Activated T-helper 1 cell treated with anti-CD3 and anti-CD28 coated beads, Interleukin-12 subunit alpha, Interleukin-12 subunit beta, Interleukin-2, Interleukin-4 antibody, amounts not matched to agents 30 ng/mL and 10 ng/mL and 1 ng/mL, durations not matched to agents 14 hours and 24 hours and 36 hours (primary cell): ENCODE measurements at regions of chr3 and their contacts with region 1.

Region 1: GRCh38 chr3:156554842-156555687 is at the start of gene SSR3:
- DNase-seq: peak; percentile 99
- H3K4me3 Mint-ChIP-seq: peak within 1 kb of the TSS; percentile 95
- H3K27ac Mint-ChIP-seq: peak within 1 kb of the TSS; percentile 94
- H3K4me1 Mint-ChIP-seq: peaks cover 53% of the 10 kb centered on the region
- H3K27me3 Mint-ChIP-seq: no peaks in the 10 kb centered on the region
- total RNA-seq, gene SSR3: 149 and 162 TPM in 2 replicates

Region 2: DNA sequence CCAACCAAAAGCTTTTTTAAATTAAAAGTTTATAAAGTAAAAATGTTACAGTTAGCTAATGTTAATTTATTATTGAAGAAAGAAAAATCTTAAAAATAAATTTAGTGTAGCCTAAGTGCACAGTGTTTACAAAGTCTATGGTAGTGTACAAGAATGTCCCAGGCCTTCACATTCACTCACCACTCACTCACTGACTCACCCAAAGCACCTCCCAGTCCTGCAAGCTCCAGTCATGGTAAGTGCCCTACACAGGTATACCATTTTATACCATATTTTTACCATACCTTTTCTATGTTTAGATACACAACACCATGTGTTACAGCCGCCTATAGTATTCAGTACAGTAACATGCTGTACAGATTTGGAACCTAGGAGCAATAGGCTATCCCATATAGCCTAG is 29.3 kb before region 1 on chr3:
- intact Hi-C with region 1: loop called (anchors 2 kb)
- DNase-seq: no peak
- H3K4me3 Mint-ChIP-seq: no peak overlapping the region
- H3K27ac Mint-ChIP-seq: no peak overlapping the region
- H3K4me1 Mint-ChIP-seq: peaks cover 27% of the 10 kb centered on the region
- H3K27me3 Mint-ChIP-seq: peaks cover 17% of the 10 kb centered on the region

Region 3: DNA sequence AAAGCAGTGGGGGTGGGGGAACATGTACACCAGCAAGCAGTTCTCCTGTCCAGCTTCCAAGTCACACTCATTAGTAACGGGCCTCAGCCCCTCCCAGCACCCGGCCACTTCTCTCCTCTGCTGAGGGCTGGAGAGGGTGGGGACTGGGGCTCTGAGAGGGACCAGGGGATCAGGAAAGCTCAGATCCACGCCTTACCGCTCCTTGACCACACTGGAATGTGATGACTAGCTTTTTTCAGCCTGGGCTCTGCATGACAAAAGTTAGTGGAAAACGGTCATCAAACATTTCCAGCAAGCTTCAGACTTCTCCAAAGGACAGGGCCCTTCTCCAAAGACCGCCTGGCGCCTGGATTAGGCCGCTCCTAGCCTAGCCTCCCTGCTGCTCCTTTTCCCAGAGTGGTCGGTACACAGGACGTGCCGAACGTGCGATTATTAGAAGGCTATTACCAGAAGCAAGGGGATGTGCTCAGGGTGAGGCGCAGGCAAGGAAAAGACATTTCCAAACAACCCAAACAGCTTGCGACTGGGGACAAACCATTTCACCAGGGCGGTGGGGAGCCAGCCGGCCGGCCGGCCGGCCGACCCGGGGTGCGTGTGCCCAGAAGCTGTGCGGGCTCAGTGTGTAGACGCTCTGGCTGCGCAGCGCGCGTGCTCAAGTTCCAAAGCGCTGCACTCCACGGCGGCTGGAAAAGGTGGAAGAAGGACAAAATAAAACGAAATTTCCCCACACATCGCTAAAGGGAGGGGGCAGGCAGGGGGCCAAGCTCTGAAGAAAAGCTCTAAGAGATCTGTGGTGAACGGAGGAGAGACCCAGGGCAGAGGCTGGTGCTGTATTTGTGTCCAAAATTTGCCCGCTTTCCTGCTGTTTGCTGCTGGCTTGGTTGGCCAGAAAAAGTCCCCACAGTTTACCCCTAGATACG is 50.9 kb after region 1 on chr3:
- intact Hi-C with region 1: loop called (anchors 2 kb)
- DNase-seq: no peak
- H3K4me3 Mint-ChIP-seq: peak overlapping the region; percentile 82
- H3K27ac Mint-ChIP-seq: peak overlapping the region; percentile 29
- H3K4me1 Mint-ChIP-seq: peaks cover 46% of the 10 kb centered on the region
- H3K27me3 Mint-ChIP-seq: peaks cover 11% of the 10 kb centered on the region

Region 4: GRCh38 chr3:157081681-157082210 is 526.7 kb after region 1 on chr3:
- intact Hi-C with region 1: loop called (anchors 2 kb)
- DNase-seq: peak; percentile 73
- H3K4me3 Mint-ChIP-seq: no peak overlapping the region
- H3K27ac Mint-ChIP-seq: no peak overlapping the region
- H3K4me1 Mint-ChIP-seq: peaks cover 46% of the 10 kb centered on the region
- H3K27me3 Mint-ChIP-seq: no peaks in the 10 kb centered on the region

Region 5: DNA sequence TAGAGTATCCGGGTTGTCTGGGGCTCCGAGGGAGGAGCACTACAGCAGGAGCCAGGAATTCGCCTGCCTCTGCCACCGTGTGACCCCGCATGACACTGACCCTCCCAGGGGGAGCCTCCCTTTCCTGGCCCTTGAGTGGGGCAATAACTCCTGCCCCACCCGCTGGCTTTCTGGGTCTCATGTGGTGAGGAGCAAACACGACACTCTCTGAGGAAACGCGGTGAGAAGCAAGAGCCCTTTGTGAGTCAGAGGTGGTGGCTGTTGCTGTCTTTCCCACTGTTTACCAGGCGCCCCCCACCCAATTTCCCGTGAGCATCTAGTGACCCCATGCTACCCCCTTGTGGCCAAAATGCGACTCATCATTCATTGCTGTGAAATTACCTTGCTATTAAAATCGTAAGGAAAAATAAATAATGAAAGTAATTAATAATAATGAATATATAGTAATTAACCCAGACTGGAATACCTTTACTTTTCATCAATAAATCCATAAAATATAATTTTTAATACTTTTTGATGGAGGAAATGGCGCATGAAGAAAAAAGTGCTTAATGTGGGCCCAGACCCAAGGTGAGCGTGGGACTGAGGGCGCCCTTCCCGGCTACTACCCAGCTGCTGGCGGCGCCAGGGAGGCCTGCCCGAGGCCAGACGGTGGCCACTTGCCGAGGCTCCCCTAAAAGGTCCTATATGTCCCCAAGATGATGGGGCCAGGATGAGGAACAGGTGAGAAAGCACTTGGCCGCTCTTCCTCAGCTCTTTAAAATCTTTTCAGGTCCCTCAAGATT is 575.6 kb after region 1 on chr3:
- intact Hi-C with region 1: loop called (anchors 1 kb)
- DNase-seq: peak; percentile 72
- H3K4me3 Mint-ChIP-seq: peak overlapping the region; percentile 59
- H3K27ac Mint-ChIP-seq: peak overlapping the region; percentile 90
- H3K4me1 Mint-ChIP-seq: peaks cover 84% of the 10 kb centered on the region
- H3K27me3 Mint-ChIP-seq: no peaks in the 10 kb centered on the region

Region 6: GRCh38 chr3:157159762-157160657 is 604.9 kb after region 1 on chr3 and contains the start of gene CCNL1:
- intact Hi-C with region 1: loop called (anchors 1 kb)
- DNase-seq: peak; percentile 95
- H3K4me3 Mint-ChIP-seq: peak within 1 kb of the TSS; percentile 93
- H3K27ac Mint-ChIP-seq: peak within 1 kb of the TSS; percentile 94
- H3K4me1 Mint-ChIP-seq: peaks cover 64% of the 10 kb centered on the region
- H3K27me3 Mint-ChIP-seq: no peaks in the 10 kb centered on the region
- total RNA-seq, gene CCNL1: 167 and 204 TPM in 2 replicates